ENCODE measurements at regions of chr10 and their contacts with region 1.

Region 1: GRCh38 chr10:29443745-29444523 is 155.1 kb downstream of the LYZL1 start:
- DNase-seq: peak; percentile 35
- H3K4me3 Mint-ChIP-seq: no peak overlapping the region
- H3K27ac Mint-ChIP-seq: no peak overlapping the region
- H3K4me1 Mint-ChIP-seq: peaks cover 14% of the 10 kb centered on the region
- H3K27me3 Mint-ChIP-seq: no peaks in the 10 kb centered on the region

Region 2: DNA sequence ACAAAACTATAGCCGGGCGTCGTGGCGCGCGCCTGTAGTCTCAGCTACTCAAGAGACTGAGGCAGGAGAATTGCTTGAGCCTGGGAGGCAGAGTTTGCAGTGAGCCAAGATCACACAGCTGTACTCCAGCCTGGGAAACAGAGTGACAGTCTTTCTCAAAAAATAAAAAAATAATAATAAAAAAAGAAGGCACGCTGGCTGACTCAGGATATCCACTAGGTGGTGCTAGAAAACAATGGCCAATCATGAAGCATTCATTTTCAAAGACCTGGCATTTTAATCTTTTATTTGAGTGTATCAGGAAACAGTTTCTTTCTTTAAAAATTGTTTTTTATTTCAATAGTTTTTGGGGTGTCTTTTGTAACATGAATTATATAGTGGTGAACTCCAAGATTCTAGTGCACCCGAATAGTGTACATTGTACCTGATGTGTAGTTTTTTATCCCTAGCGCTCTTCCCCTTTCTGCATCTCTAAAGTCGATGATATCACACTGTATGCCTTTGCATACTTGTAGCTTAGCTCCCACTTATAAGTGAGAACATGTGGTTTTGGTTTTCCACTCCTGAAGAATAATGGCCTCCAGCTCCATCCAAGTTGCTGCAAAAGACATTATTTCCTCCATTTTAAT is 66.5 kb before region 1 on chr10:
- CTCF ChIA-PET with region 1: interaction called, 10 read pairs
- intact Hi-C with region 1: loop called (anchors 1 kb)
- DNase-seq: peak; percentile 26
- H3K4me3 Mint-ChIP-seq: no peak overlapping the region
- H3K27ac Mint-ChIP-seq: no peak overlapping the region
- H3K4me1 Mint-ChIP-seq: peaks cover 8% of the 10 kb centered on the region
- H3K27me3 Mint-ChIP-seq: peaks cover 5% of the 10 kb centered on the region

Region 3: GRCh38 chr10:29409241-29410057 is 34.5 kb before region 1 on chr10:
- CTCF ChIA-PET with region 1: interaction called, 7 read pairs
- intact Hi-C with region 1: loop called (anchors 2 kb)
- DNase-seq: peak; percentile 55
- H3K4me3 Mint-ChIP-seq: peak overlapping the region; percentile 89
- H3K27ac Mint-ChIP-seq: peak overlapping the region; percentile 87
- H3K4me1 Mint-ChIP-seq: peaks cover 22% of the 10 kb centered on the region
- H3K27me3 Mint-ChIP-seq: no peaks in the 10 kb centered on the region

Region 4: GRCh38 chr10:29496341-29497162 is 52.6 kb after region 1 on chr10:
- CTCF ChIA-PET with region 1: interaction called, 3 read pairs
- intact Hi-C with region 1: loop called (anchors 1 kb)
- DNase-seq: peak; percentile 75
- H3K4me3 Mint-ChIP-seq: no peak overlapping the region
- H3K27ac Mint-ChIP-seq: no peak overlapping the region
- H3K4me1 Mint-ChIP-seq: peaks cover 5% of the 10 kb centered on the region
- H3K27me3 Mint-ChIP-seq: no peaks in the 10 kb centered on the region

Region 5: DNA sequence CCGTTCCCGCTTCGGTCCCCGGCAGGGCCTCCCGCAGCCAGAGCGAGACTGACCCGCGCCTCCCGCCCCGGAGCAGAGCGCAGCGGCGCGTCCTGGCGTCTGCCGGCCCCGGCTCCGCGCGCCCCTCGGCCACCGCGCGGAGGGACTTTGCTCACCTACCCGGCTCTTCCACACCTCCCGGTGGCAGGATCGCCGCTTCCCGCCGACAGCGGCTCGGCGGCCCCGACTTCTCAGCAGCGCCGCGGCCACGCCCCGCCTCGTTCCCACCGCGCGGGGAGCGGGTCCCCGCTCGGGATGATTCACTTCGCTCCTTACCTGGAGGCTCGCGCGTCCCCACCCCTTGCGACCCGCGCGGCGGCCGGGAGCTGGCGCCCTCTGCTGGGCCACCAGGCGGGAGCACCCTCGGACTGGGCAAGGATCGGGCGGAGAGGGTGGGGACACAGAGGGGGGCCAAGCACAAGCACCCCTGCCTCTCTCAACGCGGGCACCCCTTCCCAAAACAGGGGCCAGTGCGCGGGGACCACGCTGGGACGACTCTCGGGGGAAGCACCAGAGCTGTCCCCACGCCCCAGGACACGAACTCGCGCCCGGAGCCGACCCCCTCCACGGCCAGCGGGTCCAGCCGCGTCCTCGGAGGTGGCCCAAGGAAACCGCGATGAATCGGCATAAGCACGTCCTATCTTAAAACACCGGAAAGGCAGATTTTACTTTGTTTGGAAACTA is 291.8 kb after region 1 on chr10:
- CTCF ChIA-PET with region 1: no interaction called
- intact Hi-C with region 1: loop called (anchors 2 kb)
- DNase-seq: peak; percentile 86
- H3K4me3 Mint-ChIP-seq: peak overlapping the region; percentile 78
- H3K27ac Mint-ChIP-seq: peak overlapping the region; percentile 73
- H3K4me1 Mint-ChIP-seq: peaks cover 34% of the 10 kb centered on the region
- H3K27me3 Mint-ChIP-seq: peaks cover 8% of the 10 kb centered on the region